ENCODE measurements at regions of chr16 and their contacts with region 1.

Region 1: GRCh38 chr16:66608241-66609138 is 4.0 kb downstream of the CMTM3 start:
- DNase-seq: peak; percentile 66 to 85 (median 78)
- ATAC-seq: peak; percentile 52
- H3K4me3 ChIP-seq: no peak overlapping the region
- H3K4me3 Mint-ChIP-seq: peak overlapping the region in 8 of 10 donors; percentile 6 to 82 (median 34)
- H3K27ac ChIP-seq: peak overlapping the region; percentile 40
- H3K27ac Mint-ChIP-seq: peak overlapping the region in 8 of 9 donors; percentile 45 to 85 (median 79)
- H3K4me1 ChIP-seq: peaks cover 17 to 34% of the 10 kb centered on the region in 2 donors
- H3K4me1 Mint-ChIP-seq: peaks cover 19 to 37% (median 35%) of the 10 kb centered on the region in 7 donors
- H3K27me3 ChIP-seq: no peaks in the 10 kb centered on the region
- H3K27me3 Mint-ChIP-seq: peaks cover 0 to 3% (median 0%) of the 10 kb centered on the region in 5 donors

Region 2: DNA sequence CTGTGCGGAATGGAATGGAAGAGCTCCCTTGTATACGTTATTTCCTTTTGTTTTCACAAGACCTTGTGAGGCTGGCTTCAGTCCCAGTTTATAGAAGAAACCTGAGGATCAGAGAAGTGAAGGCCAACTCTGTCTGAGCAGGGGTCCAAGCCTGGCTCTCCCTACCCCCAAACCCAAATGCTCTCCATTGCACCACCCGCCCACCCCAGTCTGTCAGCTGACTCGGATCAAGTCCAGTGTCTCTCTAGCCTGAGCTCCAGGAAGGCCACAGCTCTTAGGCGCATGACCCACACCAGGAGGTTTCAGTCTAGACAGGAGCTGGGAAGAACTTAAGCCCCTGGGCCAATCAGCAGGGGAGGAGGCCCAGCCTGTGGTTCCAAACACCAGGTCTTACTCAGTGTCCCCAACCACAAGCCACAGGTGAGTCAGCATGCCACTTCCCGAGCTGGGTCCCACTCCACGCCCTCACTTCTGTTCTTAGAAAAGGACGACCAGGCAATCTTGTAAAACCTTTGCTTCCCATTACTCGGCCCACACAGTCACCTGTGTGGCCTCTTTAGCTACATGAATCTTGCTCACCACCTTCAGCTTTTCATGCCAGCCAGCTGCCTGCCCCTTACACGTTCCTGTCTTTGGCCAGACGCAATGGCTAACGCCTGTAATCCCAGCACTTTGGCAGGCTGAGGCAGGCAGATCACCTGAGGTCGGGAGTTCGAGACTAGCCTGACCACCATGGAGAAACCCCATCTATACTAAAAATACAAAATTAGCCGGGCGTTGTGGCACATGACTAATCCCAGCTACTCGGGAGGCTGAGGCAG is 86.3 kb before region 1 on chr16:
- CTCF ChIA-PET with region 1: interaction called, 4 read pairs
- POLR2A ChIA-PET with region 1: interaction called, 5 read pairs
- intact Hi-C with region 1: loop called (anchors 2 kb)
- DNase-seq: peak in 8 of 9 donors; percentile 26 to 92 (median 42)
- ATAC-seq: peak; percentile 65
- H3K4me3 ChIP-seq: peak overlapping the region; percentile 39
- H3K4me3 Mint-ChIP-seq: peak overlapping the region; percentile 71 to 85 (median 80)
- H3K27ac ChIP-seq: no peak overlapping the region
- H3K27ac Mint-ChIP-seq: peak overlapping the region; percentile 79 to 96 (median 91)
- H3K4me1 ChIP-seq: peaks cover 73 to 74% of the 10 kb centered on the region in 2 donors
- H3K4me1 Mint-ChIP-seq: peaks cover 69 to 97% (median 85%) of the 10 kb centered on the region in 7 donors
- H3K27me3 ChIP-seq: no peaks in the 10 kb centered on the region
- H3K27me3 Mint-ChIP-seq: peaks cover 0 to 4% (median 0%) of the 10 kb centered on the region in 5 donors

Region 3: GRCh38 chr16:66562407-66562806 is 46.1 kb before region 1 on chr16:
- CTCF ChIA-PET with region 1: interaction called, 26 read pairs
- POLR2A ChIA-PET with region 1: interaction called, 28 read pairs
- intact Hi-C with region 1: loop called (anchors 1 kb)
- DNase-seq: peak in 4 of 9 donors; percentile 21 to 53 (median 34)
- ATAC-seq: peak; percentile 60
- H3K4me3 ChIP-seq: no peak overlapping the region
- H3K4me3 Mint-ChIP-seq: no peak overlapping the region
- H3K27ac ChIP-seq: no peak overlapping the region
- H3K27ac Mint-ChIP-seq: peak overlapping the region in 5 of 9 donors; percentile 14 to 71 (median 26)
- H3K4me1 ChIP-seq: peaks cover 22 to 46% of the 10 kb centered on the region in 2 donors
- H3K4me1 Mint-ChIP-seq: peaks cover 31 to 67% (median 41%) of the 10 kb centered on the region in 7 donors
- H3K27me3 ChIP-seq: no peaks in the 10 kb centered on the region
- H3K27me3 Mint-ChIP-seq: no peaks in the 10 kb centered on the region

Region 4: GRCh38 chr16:66650707-66651473 is 42.4 kb after region 1 on chr16:
- CTCF ChIA-PET with region 1: interaction called, 11 read pairs
- POLR2A ChIA-PET with region 1: interaction called, 5 read pairs
- intact Hi-C with region 1: loop called (anchors 1 to 2 kb)
- DNase-seq: peak; percentile 57 to 87 (median 81)
- ATAC-seq: peak; percentile 99
- H3K4me3 ChIP-seq: peak overlapping the region; percentile 44
- H3K4me3 Mint-ChIP-seq: peak overlapping the region; percentile 50 to 86 (median 76)
- H3K27ac ChIP-seq: no peak overlapping the region
- H3K27ac Mint-ChIP-seq: peak overlapping the region in 6 of 9 donors; percentile 41 to 71 (median 62)
- H3K4me1 ChIP-seq: peaks cover 0 to 5% of the 10 kb centered on the region in 2 donors
- H3K4me1 Mint-ChIP-seq: peaks cover 0 to 15% (median 9%) of the 10 kb centered on the region in 7 donors
- H3K27me3 ChIP-seq: no peaks in the 10 kb centered on the region
- H3K27me3 Mint-ChIP-seq: peaks cover 2 to 11% (median 6%) of the 10 kb centered on the region in 5 donors

Region 5: GRCh38 chr16:66751303-66751991 is 143.0 kb after region 1 on chr16 and contains the start of gene DYNC1LI2:
- CTCF ChIA-PET with region 1: interaction called, 4 read pairs
- POLR2A ChIA-PET with region 1: interaction called, 7 read pairs
- intact Hi-C with region 1: loop called (anchors 1 to 5 kb)
- DNase-seq: peak; percentile 76 to 95 (median 88)
- ATAC-seq: peak; percentile 98
- H3K4me3 ChIP-seq: peak within 1 kb of the TSS; percentile 78
- H3K4me3 Mint-ChIP-seq: peak within 1 kb of the TSS; percentile 76 to 95 (median 90)
- H3K27ac ChIP-seq: peak within 1 kb of the TSS; percentile 91
- H3K27ac Mint-ChIP-seq: peak within 1 kb of the TSS; percentile 73 to 96 (median 88)
- H3K4me1 ChIP-seq: peaks cover 21 to 24% of the 10 kb centered on the region in 2 donors
- H3K4me1 Mint-ChIP-seq: peaks cover 30 to 45% (median 42%) of the 10 kb centered on the region in 7 donors
- H3K27me3 ChIP-seq: no peaks in the 10 kb centered on the region
- H3K27me3 Mint-ChIP-seq: peaks cover 0 to 35% (median 0%) of the 10 kb centered on the region in 5 donors
- total RNA-seq, gene DYNC1LI2: 72.3 to 85.7 (median 80.9) TPM

Region 6: DNA sequence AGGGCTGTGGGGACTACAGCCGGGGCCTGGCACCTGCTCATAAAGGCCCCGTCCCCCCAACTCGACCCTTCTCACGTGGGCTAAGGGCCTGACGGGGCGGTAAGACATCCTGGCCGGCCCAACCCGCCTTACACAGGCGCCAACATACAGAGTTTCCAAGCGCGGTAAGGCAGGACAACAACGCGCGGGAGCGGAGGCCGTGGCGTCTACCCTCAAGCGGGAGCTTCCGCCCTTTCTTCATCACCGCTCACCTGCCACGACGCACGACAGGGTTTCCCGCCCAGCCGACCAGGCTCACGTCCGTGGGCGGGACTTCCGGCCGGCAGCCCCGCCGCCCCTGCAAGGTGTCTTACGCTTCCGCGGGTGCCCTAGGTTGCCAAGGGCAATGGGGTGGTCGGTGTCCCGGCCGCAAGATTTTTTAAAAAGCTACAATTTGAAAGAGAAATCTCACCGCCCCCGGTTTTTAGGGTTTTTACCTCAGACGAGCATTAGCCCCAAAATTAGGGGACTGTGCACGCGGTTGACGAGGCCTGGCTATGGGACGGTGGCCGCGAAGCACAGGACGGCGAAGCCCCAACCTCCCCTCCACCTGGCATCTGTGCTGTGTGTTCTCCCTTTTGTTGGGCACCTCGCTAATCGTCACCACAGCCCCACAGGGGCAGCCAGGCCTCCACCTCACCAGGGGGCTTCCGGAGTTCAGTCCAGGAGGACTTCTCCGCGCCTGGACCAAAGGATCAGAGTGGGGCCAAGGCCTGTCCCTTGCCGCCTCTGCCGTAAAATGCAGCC is 193.0 kb after region 1 on chr16 and contains the start of gene TERB1:
- CTCF ChIA-PET with region 1: no interaction called
- POLR2A ChIA-PET with region 1: no interaction called
- intact Hi-C with region 1: no loop called
- DNase-seq: no peak
- ATAC-seq: no peak
- H3K4me3 ChIP-seq: no peak within 1 kb of the TSS
- H3K4me3 Mint-ChIP-seq: no peak within 1 kb of the TSS
- H3K27ac ChIP-seq: no peak within 1 kb of the TSS
- H3K27ac Mint-ChIP-seq: no peak within 1 kb of the TSS
- H3K4me1 ChIP-seq: no peaks in the 10 kb centered on the region
- H3K4me1 Mint-ChIP-seq: no peaks in the 10 kb centered on the region
- H3K27me3 ChIP-seq: no peaks in the 10 kb centered on the region
- H3K27me3 Mint-ChIP-seq: no peaks in the 10 kb centered on the region
- total RNA-seq, gene TERB1: 0.16 to 0.83 (median 0.37) TPM in 4 of 5 experiments, not detected in the other

Region 7: DNA sequence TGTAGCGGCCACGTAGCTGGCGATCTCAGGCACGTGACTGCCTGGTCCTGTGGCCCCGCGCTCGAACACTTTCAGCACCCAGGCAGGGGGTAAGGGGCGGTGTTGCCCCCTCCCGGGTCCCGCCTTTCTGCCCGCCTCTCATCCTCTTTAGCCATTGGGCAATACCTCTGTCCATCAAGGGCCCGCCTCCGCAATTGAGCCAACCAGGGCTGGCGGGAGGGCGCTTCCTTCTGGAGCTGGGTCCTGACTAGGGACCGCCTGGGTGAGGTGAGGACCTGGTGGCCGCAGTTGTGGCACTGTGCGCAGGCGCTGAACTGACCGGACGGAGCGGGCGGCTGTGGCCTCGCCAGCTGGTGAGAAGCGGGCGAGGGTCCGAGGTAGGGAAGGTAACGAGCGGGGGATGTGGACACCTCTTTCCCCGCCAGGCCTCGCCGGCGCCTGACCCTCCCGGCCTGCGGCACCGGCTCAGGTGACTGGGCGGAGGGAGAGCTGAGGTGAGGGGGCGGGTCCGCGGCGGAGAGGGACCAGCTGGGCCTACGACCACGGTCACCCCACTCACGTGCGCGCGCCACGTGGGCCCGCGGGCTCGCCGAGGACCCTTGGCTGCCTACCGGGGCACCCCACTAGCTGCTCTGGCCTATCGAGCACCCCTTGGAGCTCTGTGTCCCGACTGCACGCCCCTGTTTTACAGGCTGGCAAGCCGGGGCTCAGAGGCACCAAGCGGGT is 272.0 kb after region 1 on chr16 and contains the start of gene PDP2:
- CTCF ChIA-PET with region 1: no interaction called
- POLR2A ChIA-PET with region 1: no interaction called
- intact Hi-C with region 1: loop called in 1 of 2 experiments (anchors 1 kb)
- DNase-seq: peak; percentile 73 to 92 (median 90)
- ATAC-seq: peak; percentile 99
- H3K4me3 ChIP-seq: peak within 1 kb of the TSS; percentile 86
- H3K4me3 Mint-ChIP-seq: peak within 1 kb of the TSS; percentile 92 to 100 (median 99)
- H3K27ac ChIP-seq: peak within 1 kb of the TSS; percentile 67
- H3K27ac Mint-ChIP-seq: peak within 1 kb of the TSS; percentile 89 to 98 (median 92)
- H3K4me1 ChIP-seq: peaks cover 4 to 12% of the 10 kb centered on the region in 2 donors
- H3K4me1 Mint-ChIP-seq: peaks cover 16 to 51% (median 31%) of the 10 kb centered on the region in 7 donors
- H3K27me3 ChIP-seq: no peaks in the 10 kb centered on the region
- H3K27me3 Mint-ChIP-seq: no peaks in the 10 kb centered on the region
- total RNA-seq, gene PDP2: 4.5 to 24.0 (median 15.9) TPM

Measured in naive thymus-derived CD4-positive, alpha-beta T cell (primary cell).